Mucosa of descending colon (tissue), 3 donors: ENCODE measurements at regions of chr3 and their contacts with region 1.

Region 1: DNA sequence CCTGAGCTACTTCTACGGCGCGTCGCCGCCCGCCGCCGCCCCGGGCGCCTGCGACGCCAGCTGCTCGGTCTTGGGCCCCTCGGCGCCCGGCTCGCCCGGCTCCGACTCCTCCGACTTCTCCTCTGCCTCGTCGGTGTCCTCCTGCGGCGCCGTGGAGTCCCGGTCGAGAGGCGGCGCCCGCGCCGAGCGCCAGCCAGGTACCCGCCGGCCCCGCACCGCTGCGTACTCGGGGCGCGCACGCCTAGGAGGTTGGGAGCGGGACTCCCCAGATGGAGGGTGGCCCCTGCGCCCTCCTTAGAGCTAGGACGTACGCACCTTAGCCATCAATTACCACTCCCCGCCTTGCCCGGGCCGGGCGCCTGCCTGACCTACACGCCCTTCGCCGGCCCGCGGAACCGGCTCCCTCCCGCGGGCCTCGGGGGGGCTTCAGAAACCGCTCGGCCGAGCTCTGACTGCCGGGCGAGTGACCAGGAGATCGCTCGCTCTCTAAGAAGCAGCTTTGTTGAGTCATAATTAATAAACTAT is 469 bp downstream of the NFKBIZ start:
- DNase-seq: peak; percentile 54 to 81 (median 75)
- ATAC-seq: peak; percentile 33
- H3K4me3 ChIP-seq: peak overlapping the region; percentile 90
- H3K4me1 ChIP-seq: peaks cover 49% of the 10 kb centered on the region
- CTCF ChIP-seq: no peak

Region 2: DNA sequence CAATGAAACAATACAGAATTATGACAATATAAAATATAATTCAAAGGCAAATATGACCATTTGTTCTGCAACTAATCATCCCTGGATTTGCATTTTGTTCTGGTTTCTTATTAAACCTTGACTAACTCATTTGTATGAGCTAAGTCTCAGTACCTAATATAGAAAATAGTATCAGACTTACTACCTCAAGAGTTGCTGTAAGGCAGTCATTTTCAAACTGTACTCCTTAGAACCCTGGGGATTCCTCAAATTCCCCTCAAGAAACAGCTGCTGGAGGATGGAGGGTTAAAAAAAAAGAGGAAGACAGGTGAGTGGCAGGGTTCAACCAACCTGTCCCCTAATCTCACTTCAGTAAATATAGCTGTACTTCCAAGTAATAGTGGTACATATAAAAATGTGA is 183.9 kb before region 1 on chr3:
- intact Hi-C with region 1: no loop called
- DNase-seq: no peak
- ATAC-seq: no peak
- H3K4me3 ChIP-seq: no peak overlapping the region
- H3K4me1 ChIP-seq: no peaks in the 10 kb centered on the region
- CTCF ChIP-seq: no peak

Region 3: GRCh38 chr3:102089904-102090492 is 240.2 kb after region 1 on chr3:
- intact Hi-C with region 1: loop called in 1 of 2 experiments (anchors 10 kb)
- DNase-seq: peak in 1 of 3 donors; percentile 51
- ATAC-seq: peak; percentile 92
- H3K4me3 ChIP-seq: no peak overlapping the region
- H3K4me1 ChIP-seq: peaks cover 35% of the 10 kb centered on the region
- CTCF ChIP-seq: no peak